ENCODE measurements at regions of chr4 and their contacts with region 1.

Region 1: DNA sequence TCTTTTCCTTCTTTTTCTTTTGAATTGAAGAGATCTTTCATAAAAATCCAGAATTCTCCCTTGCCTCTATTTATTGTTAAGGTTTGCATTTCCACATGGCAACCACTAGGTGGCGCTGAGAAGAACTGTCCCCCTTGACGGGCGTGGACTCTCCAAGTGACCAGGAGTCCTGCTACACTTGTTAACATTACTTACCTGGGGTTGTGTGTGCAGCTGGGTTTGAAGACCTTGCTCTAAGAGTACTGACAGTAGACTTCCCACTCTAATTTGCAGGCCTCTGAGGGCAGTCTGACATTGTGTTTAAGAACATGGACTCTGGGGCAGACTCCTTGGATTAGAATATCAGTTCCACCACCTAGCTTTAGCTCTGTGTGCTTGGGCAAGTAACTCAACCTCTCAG is 52.8 kb downstream of the GPRIN3 start:
- DNase-seq: peak; percentile 46 to 61 (median 55)
- H3K4me3 ChIP-seq: no peak overlapping the region
- H3K4me3 Mint-ChIP-seq: peak overlapping the region in 4 of 8 donors; percentile 4 to 45 (median 11)
- H3K27ac ChIP-seq: peak overlapping the region; percentile 45
- H3K27ac Mint-ChIP-seq: peak overlapping the region; percentile 72 to 93 (median 86)
- H3K4me1 ChIP-seq: peaks cover 83% of the 10 kb centered on the region
- H3K4me1 Mint-ChIP-seq: peaks cover 73 to 99% (median 86%) of the 10 kb centered on the region in 4 donors
- H3K27me3 ChIP-seq: no peaks in the 10 kb centered on the region
- H3K27me3 Mint-ChIP-seq: no peaks in the 10 kb centered on the region

Region 2: DNA sequence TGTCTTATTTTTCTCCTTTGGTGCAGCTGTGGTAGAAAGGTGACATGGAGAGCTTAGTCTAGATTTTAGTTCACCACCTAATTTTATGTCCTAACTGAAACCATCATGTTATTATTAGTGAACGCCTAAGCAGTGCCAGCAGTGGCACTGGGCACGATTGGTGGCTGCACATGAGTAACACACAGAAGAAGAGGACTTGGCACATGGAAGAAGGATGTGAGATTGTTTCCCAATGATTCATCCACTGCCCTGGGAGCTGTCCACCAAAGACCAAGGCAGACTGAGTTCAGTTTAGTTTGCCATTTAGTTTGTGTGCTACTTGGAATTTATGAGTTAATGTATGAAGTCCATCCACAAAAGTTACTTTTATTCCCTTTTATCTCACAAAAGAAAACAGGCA is 489.1 kb before region 1 on chr4:
- CTCF ChIA-PET with region 1: no interaction called
- POLR2A ChIA-PET with region 1: no interaction called
- intact Hi-C with region 1: no loop called
- DNase-seq: no peak
- H3K4me3 ChIP-seq: no peak overlapping the region
- H3K4me3 Mint-ChIP-seq: no peak overlapping the region
- H3K27ac ChIP-seq: no peak overlapping the region
- H3K27ac Mint-ChIP-seq: no peak overlapping the region
- H3K4me1 ChIP-seq: no peaks in the 10 kb centered on the region
- H3K4me1 Mint-ChIP-seq: no peaks in the 10 kb centered on the region
- H3K27me3 ChIP-seq: no peaks in the 10 kb centered on the region
- H3K27me3 Mint-ChIP-seq: no peaks in the 10 kb centered on the region

Region 3: GRCh38 chr4:89242864-89243732 is 11.7 kb before region 1 on chr4:
- CTCF ChIA-PET with region 1: interaction called, 35 read pairs
- POLR2A ChIA-PET with region 1: interaction called, 4 read pairs
- intact Hi-C with region 1: no loop called
- DNase-seq: peak; percentile 55 to 81 (median 70)
- H3K4me3 ChIP-seq: no peak overlapping the region
- H3K4me3 Mint-ChIP-seq: peak overlapping the region in 6 of 8 donors; percentile 7 to 51 (median 18)
- H3K27ac ChIP-seq: peak overlapping the region; percentile 68
- H3K27ac Mint-ChIP-seq: peak overlapping the region; percentile 78 to 98 (median 93)
- H3K4me1 ChIP-seq: peaks cover 60% of the 10 kb centered on the region
- H3K4me1 Mint-ChIP-seq: peaks cover 46 to 74% (median 59%) of the 10 kb centered on the region in 4 donors
- H3K27me3 ChIP-seq: no peaks in the 10 kb centered on the region
- H3K27me3 Mint-ChIP-seq: no peaks in the 10 kb centered on the region

Region 4: GRCh38 chr4:89275587-89275986 is 20.7 kb after region 1 on chr4:
- CTCF ChIA-PET with region 1: interaction called, 171 read pairs
- POLR2A ChIA-PET with region 1: interaction called, 7 read pairs
- intact Hi-C with region 1: loop called (anchors 2 kb)
- DNase-seq: no peak
- H3K4me3 ChIP-seq: no peak overlapping the region
- H3K4me3 Mint-ChIP-seq: peak overlapping the region in 4 of 8 donors; percentile 3 to 18 (median 12)
- H3K27ac ChIP-seq: no peak overlapping the region
- H3K27ac Mint-ChIP-seq: peak overlapping the region in 6 of 7 donors; percentile 3 to 87 (median 52)
- H3K4me1 ChIP-seq: peaks cover 97% of the 10 kb centered on the region
- H3K4me1 Mint-ChIP-seq: peaks cover 56 to 77% (median 69%) of the 10 kb centered on the region in 4 donors
- H3K27me3 ChIP-seq: no peaks in the 10 kb centered on the region
- H3K27me3 Mint-ChIP-seq: no peaks in the 10 kb centered on the region

Region 5: DNA sequence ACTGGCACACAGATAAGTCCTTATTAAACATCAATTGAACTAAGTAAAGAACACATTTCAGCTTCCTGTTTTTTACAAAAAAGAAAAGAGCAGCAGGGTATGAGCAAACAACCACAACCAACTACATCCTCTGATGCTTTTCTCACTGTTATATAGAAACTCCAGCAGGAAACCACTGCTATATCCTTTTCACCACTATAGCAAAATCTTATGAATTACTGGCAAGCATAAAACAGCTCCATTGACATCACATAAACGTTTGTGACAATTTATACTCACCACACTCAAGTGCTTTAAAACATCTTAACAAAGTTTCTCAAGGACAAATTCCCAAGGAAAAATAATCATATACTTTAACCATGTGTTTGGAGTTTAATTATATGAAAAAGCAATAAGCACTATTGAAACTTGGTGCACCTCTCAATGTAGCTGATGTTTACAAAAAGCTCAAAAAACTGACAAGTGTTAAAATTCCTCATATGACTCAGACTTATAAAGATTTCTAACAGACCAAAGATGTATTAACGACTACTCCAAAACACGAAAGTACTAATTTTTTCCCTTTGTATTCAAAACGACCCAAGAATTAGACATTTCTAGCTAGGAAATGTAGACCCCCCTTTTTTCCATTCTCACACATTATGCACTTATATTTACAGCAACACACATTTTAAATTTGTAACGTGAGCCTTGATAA is 39.9 kb after region 1 on chr4:
- CTCF ChIA-PET with region 1: interaction called, 285 read pairs
- POLR2A ChIA-PET with region 1: interaction called, 176 read pairs
- intact Hi-C with region 1: loop called (anchors 2 kb)
- DNase-seq: peak; percentile 62 to 87 (median 79)
- H3K4me3 ChIP-seq: peak overlapping the region in 1 of 2 donors; percentile 51
- H3K4me3 Mint-ChIP-seq: peak overlapping the region; percentile 70 to 91 (median 80)
- H3K27ac ChIP-seq: peak overlapping the region; percentile 70
- H3K27ac Mint-ChIP-seq: peak overlapping the region; percentile 94 to 98 (median 97)
- H3K4me1 ChIP-seq: peaks cover 92% of the 10 kb centered on the region
- H3K4me1 Mint-ChIP-seq: peaks cover 63 to 98% (median 78%) of the 10 kb centered on the region in 4 donors
- H3K27me3 ChIP-seq: no peaks in the 10 kb centered on the region
- H3K27me3 Mint-ChIP-seq: no peaks in the 10 kb centered on the region

Region 6: DNA sequence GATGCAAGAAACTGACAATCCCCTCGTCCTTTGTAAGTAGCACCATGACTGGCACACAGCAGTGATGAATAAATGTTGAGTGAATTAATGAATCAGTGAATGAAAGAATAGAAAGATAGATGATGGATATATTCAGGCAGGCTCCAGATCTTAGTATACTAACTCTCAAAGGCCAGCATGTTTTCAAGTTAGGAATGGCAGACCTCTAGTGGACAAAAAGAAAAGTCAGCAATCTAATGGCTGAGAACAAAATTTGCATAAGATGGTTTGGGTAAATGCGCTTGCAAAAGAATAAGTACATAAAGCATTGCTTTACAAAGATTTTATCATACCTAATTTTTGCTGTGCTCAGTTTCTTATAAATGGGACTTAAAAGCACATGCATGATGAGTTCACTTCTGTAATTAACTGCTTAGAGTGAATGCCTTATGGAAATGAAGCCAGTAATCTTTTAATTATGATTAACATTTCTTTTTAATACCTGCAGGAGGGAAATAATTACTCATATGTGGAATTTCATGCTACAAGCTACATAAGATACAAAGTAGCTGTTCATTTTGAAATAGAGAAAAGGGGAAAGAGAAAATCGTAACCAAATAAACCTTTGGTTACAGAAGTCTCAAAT is 179.6 kb after region 1 on chr4:
- CTCF ChIA-PET with region 1: interaction called, 22 read pairs
- POLR2A ChIA-PET with region 1: interaction called, 3 read pairs
- intact Hi-C with region 1: loop called (anchors 1 kb)
- DNase-seq: peak in 4 of 5 donors; percentile 48 to 58 (median 55)
- H3K4me3 ChIP-seq: no peak overlapping the region
- H3K4me3 Mint-ChIP-seq: no peak overlapping the region
- H3K27ac ChIP-seq: no peak overlapping the region
- H3K27ac Mint-ChIP-seq: no peak overlapping the region
- H3K4me1 ChIP-seq: peaks cover 16% of the 10 kb centered on the region
- H3K4me1 Mint-ChIP-seq: peaks cover 13 to 16% (median 14%) of the 10 kb centered on the region in 4 donors
- H3K27me3 ChIP-seq: no peaks in the 10 kb centered on the region
- H3K27me3 Mint-ChIP-seq: peaks cover 0 to 3% of the 10 kb centered on the region in 2 donors

Measured in CD4-positive, alpha-beta memory T cell (primary cell).